Activated CD4-positive, alpha-beta memory T cell treated with anti-CD3 and anti-CD28 coated beads for 36 hours (primary cell): ENCODE measurements at regions of chr10 and their contacts with region 1.

Region 1: DNA sequence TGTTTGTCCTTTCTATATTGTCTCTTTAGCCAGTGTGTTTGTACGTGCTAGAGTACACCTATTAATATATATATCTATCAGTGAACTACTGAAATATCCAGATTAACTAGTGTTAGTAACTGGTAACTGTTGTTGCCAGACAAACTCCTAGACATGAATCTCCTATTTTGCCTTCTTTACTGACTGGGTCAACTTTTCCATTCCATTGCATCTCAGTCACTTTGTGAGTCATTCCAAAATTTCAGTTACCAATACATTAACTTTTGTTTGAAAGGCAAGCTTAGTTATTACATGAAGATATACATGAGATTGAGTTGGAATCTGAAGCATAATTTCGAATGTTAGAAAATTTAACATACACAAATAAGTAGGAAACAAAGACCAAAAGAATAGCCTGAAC is 51.4 kb downstream of the BTAF1 start:
- DNase-seq: no peak
- H3K4me3 Mint-ChIP-seq: no peak overlapping the region
- H3K27ac Mint-ChIP-seq: peak overlapping the region; percentile 25
- H3K4me1 Mint-ChIP-seq: peaks cover 33% of the 10 kb centered on the region
- H3K27me3 Mint-ChIP-seq: no peaks in the 10 kb centered on the region

Region 2: DNA sequence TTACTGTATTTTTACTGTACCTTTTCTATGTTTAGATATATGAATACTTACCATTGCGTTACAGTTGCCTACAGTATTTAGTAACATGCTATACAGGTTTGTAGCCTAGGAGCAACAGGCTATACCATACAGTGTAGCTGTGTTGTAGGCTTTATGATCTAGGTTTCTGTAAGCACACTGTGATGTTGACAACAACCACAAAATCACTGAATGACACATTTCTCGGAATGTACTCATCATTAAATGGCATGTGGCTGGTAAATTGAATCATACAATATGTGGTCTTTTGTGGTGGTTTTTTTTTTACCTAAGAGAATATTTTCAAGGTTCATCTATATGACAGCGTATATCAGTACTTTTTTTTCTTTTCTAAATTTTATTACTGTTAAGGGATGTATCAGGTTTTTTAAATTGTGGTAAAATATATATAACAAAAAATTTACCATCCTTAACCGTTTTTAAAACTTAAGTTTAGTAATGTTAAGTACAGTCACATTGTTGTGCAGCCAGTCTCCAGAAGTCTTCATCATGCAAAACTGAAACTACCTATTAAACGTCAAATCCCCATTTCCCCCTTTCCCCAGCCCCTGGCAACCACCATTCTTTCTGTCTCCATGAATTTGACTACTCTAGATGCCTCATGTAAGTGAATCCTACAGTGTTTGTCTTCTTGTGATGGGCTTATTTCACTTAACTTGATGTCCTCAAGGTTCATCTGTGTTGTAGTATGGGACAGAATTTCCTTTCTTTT is 29.9 kb before region 1 on chr10:
- CTCF ChIA-PET with region 1: no interaction called
- POLR2A ChIA-PET with region 1: no interaction called
- intact Hi-C with region 1: loop called (anchors 1 kb)
- DNase-seq: peak; percentile 48
- H3K4me3 Mint-ChIP-seq: no peak overlapping the region
- H3K27ac Mint-ChIP-seq: peak overlapping the region; percentile 61
- H3K4me1 Mint-ChIP-seq: peaks cover 21% of the 10 kb centered on the region
- H3K27me3 Mint-ChIP-seq: no peaks in the 10 kb centered on the region

Region 3: GRCh38 chr10:92219516-92219915 is 244.6 kb after region 1 on chr10:
- CTCF ChIA-PET with region 1: no interaction called
- POLR2A ChIA-PET with region 1: no interaction called
- intact Hi-C with region 1: loop called (anchors 10 kb)
- DNase-seq: no peak
- H3K4me3 Mint-ChIP-seq: no peak overlapping the region
- H3K27ac Mint-ChIP-seq: no peak overlapping the region
- H3K4me1 Mint-ChIP-seq: no peaks in the 10 kb centered on the region
- H3K27me3 Mint-ChIP-seq: no peaks in the 10 kb centered on the region